ENCODE measurements at regions of chr9 and their contacts with region 1.

Region 1: GRCh38 chr9:4939118-4939561 is 45.9 kb upstream of the JAK2 start:
- DNase-seq: peak; percentile 66
- ATAC-seq: peak; percentile 93
- H3K4me3 ChIP-seq: peak overlapping the region in 2 of 5 experiments; percentile 10 to 41
- H3K4me3 Mint-ChIP-seq: peak overlapping the region; percentile 72
- H3K27ac ChIP-seq: peak overlapping the region; percentile 24 to 67
- H3K27ac Mint-ChIP-seq: peak overlapping the region; percentile 84
- H3K4me1 ChIP-seq: peaks cover 41 to 44% of the 10 kb centered on the region in 2 donors
- H3K4me1 Mint-ChIP-seq: peaks cover 57% of the 10 kb centered on the region
- H3K27me3 ChIP-seq: no peaks in the 10 kb centered on the region
- H3K27me3 Mint-ChIP-seq: no peaks in the 10 kb centered on the region
- CTCF ChIP-seq: no peak

Region 2: DNA sequence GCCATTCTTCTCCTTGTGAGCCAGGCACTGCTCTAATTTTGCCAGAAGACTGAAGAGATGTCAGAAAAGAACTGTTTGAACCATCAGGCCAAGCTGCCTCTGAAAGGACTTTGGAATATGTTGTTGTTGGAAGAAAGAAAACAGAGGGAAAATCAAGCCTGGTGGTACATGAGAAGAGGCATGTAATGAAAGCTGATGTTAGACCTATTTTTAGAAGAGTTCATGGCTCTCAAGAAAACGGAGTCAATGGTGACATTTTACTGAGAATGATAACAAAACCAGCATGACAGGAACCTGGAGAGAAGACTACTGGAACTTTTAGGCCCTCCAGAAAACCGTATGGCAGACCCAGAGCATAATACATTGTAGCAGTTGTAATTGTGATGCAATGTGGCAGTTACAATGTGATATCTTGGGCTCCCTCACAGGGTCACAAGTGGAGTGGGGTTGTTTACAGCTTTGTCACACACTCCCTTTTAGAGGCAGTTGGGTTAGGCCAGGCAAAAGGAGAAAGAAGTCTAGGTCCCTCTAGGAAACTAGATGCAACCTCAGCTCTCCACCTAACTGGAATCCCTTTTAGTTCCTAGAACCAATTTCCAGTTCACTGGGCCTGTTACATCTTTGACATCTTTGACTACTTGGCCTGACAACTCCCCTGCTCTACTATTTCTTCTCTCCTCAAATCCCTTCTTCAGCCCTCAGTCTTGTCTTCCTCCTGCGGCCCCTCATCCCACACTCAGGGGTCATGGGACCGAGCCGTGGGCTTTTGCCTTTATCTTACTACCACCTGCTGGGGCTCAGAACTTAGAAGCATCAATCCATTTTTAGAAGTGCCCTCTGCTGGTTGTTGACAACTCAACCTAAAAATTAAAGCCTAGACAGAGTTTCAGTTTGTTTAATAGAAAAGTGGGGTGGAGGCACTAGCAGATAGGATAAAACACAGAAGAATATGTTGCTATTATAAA is 15.3 kb before region 1 on chr9:
- CTCF ChIA-PET with region 1: interaction called, 12 read pairs
- POLR2A ChIA-PET with region 1: no interaction called
- intact Hi-C with region 1: no loop called
- DNase-seq: peak; percentile 63
- ATAC-seq: peak; percentile 60
- H3K4me3 ChIP-seq: no peak overlapping the region
- H3K4me3 Mint-ChIP-seq: no peak overlapping the region
- H3K27ac ChIP-seq: no peak overlapping the region
- H3K27ac Mint-ChIP-seq: no peak overlapping the region
- H3K4me1 ChIP-seq: peaks cover 6 to 8% of the 10 kb centered on the region in 2 donors
- H3K4me1 Mint-ChIP-seq: peaks cover 9% of the 10 kb centered on the region
- H3K27me3 ChIP-seq: no peaks in the 10 kb centered on the region
- H3K27me3 Mint-ChIP-seq: no peaks in the 10 kb centered on the region
- CTCF ChIP-seq: peak; percentile 42

Region 3: GRCh38 chr9:4970970-4971641 is 32.0 kb after region 1 on chr9:
- CTCF ChIA-PET with region 1: no interaction called
- POLR2A ChIA-PET with region 1: interaction called, 11 read pairs
- intact Hi-C with region 1: no loop called
- DNase-seq: peak; percentile 61
- ATAC-seq: peak; percentile 83
- H3K4me3 ChIP-seq: peak overlapping the region in 4 of 5 experiments; percentile 5 to 55 (median 42)
- H3K4me3 Mint-ChIP-seq: no peak overlapping the region
- H3K27ac ChIP-seq: peak overlapping the region; percentile 26 to 74
- H3K27ac Mint-ChIP-seq: no peak overlapping the region
- H3K4me1 ChIP-seq: peaks cover 26 to 27% of the 10 kb centered on the region in 2 donors
- H3K4me1 Mint-ChIP-seq: peaks cover 18% of the 10 kb centered on the region
- H3K27me3 ChIP-seq: no peaks in the 10 kb centered on the region
- H3K27me3 Mint-ChIP-seq: no peaks in the 10 kb centered on the region
- CTCF ChIP-seq: no peak

Measured in B cell (primary cell).